ENCODE measurements at regions of chr12 and their contacts with region 1.

Region 1: DNA sequence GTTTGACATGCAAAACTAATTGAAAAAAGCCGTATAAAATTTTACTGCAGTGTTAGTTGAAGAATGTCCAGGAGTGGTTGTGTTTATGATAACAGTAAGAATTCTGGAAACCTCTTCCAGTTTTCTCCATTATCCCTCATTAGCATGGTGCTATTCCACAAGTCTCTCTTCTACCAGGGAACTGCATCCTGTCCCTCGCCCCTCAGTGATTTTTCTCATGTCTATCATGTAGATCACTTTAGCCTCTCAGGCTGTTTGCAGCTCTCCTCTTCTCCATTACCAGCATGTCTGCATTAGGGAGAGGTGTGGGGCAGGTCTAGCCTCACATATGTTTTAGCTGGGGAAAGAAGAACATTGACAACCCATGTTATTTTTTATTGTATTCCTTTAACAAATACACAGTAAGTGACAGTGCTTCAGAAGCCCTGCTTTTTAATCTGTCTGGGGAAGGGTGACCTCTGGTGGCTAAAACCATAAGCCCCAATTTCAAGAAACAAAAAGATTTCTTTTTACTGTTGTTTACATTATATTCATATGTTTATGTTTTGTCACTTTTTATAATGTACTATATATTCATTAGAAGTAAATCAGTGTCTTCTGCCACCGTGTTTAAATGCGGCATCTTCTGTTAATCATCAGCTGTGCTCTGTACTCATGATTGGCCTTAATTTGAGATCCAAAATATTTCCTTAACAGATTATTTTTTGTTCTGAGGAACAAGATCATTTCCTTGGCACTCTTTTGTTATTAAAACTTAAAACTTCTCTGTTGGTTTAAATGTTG is 70.7 kb downstream of the RASSF8 start:
- DNase-seq: peak; percentile 77
- H3K4me3 Mint-ChIP-seq: no peak overlapping the region
- H3K27ac Mint-ChIP-seq: no peak overlapping the region
- H3K4me1 Mint-ChIP-seq: no peaks in the 10 kb centered on the region
- H3K27me3 Mint-ChIP-seq: peaks cover 10% of the 10 kb centered on the region

Region 2: DNA sequence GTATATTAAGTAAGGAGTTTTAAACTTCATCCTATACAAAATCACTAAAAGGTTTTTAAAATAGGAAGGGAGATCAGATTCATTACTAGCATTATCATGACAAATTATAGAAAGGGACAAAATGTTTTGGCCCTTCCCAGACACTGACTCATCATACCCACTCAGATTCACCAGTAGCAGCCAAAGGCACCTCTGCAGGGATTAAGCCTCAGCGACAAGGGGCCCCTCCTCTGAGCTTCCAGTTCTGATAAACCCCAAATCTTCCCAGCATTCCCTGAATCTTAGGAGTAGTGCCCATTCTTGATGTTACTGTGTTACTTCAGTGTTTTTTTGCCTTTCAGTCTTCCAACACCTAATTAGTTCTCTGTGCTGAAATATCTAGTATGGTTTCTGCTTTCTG is 793.0 kb before region 1 on chr12:
- intact Hi-C with region 1: loop called (anchors 10 kb)
- DNase-seq: no peak
- H3K4me3 Mint-ChIP-seq: no peak overlapping the region
- H3K27ac Mint-ChIP-seq: peak overlapping the region; percentile 3
- H3K4me1 Mint-ChIP-seq: peaks cover 11% of the 10 kb centered on the region
- H3K27me3 Mint-ChIP-seq: no peaks in the 10 kb centered on the region

Region 3: GRCh38 chr12:25436203-25437030 is 592.7 kb before region 1 on chr12:
- intact Hi-C with region 1: loop called (anchors 1 kb)
- DNase-seq: peak; percentile 85
- H3K4me3 Mint-ChIP-seq: peak overlapping the region; percentile 77
- H3K27ac Mint-ChIP-seq: no peak overlapping the region
- H3K4me1 Mint-ChIP-seq: peaks cover 10% of the 10 kb centered on the region
- H3K27me3 Mint-ChIP-seq: peaks cover 2% of the 10 kb centered on the region

Region 4: DNA sequence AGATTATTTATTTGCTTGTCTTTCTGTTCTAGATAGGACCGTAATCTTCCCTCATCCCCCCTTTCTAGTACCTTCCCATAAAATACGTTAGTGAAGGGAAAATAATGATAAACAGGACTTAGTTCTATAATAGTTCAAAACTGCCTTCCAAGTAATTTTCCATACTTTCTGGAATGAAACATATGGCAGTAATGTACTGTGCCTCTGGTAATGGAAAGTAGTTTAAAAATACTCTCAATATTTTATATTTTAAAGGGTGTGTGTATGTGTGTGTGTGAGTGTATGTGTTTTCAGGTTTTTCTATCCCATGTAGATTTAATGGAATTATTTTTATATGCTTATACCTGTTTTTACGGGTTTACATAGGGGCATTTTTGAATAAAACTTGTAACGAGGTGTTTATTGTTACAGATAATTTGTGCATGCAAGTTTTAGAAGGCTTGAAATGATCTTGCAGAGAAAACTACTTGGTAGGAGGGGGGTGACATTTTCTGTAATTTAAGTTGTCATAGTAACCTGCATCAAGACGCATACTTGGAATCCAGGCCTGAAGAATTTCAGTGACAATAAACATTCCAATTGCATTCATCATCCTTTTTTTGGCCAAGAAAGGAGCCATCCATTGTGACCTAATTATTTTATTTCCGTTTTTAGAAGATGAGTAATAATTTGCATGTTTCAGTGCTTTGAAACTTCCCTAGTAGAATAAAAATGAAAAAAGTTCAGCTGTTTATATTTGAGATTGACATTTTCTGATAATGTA is 31.8 kb before region 1 on chr12:
- intact Hi-C with region 1: no loop called
- DNase-seq: no peak
- H3K4me3 Mint-ChIP-seq: no peak overlapping the region
- H3K27ac Mint-ChIP-seq: no peak overlapping the region
- H3K4me1 Mint-ChIP-seq: no peaks in the 10 kb centered on the region
- H3K27me3 Mint-ChIP-seq: peaks cover 5% of the 10 kb centered on the region

Measured in activated CD4-positive, alpha-beta T cell treated with anti-CD3 and anti-CD28 coated beads, Interleukin-2, amount 10 ng/mL, durations not matched to agents 24 days and 14 days (primary cell).